ENCODE measurements at regions of chr11 and their contacts with region 1.

Region 1: DNA sequence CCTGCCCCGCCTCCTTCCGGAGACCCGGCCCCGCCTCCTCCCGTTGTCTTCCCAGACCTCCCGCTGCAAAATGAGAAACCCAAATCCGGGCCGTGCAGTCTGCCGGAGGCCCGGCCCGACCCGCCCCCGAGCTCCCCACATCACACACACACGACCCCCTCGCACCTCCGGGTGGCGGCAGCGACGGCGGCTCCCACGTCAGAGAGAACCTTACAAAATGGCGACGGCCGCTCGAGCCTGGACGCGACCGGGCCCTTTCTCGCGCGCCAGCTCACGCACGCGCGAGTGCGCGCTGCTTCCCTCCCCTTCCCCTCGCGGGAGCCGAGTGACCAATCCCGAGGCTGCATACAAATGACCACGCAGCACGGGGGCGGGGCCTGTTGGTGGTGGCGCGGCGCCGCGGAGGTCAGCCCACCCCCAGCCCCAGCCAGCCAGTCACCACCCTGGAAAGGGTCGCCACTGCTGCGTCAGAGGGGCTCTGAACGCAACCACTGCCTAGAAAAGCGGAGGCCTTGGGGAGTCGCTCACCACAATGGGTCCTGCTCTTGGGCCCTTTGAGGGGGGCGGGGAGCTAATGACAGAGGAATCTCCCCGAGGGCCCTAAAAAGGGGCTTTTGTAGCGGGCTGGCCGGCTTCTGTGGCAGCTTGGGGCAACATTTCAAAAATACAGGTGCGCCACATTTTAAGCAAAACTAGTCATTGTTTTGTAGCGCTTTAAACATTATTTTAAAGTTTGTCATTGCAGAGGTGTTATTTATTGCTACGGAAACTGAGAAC is at the start of gene RBM4B:
- DNase-seq: peak; percentile 91 to 98 (median 94)
- ATAC-seq: peak; percentile 88 to 91 (median 89)
- H3K4me3 ChIP-seq: peak within 1 kb of the TSS; percentile 89 to 94
- H3K4me3 Mint-ChIP-seq: peak within 1 kb of the TSS; percentile 90 to 96 (median 94)
- H3K27ac ChIP-seq: peak within 1 kb of the TSS; percentile 97
- H3K27ac Mint-ChIP-seq: peak within 1 kb of the TSS; percentile 98
- H3K4me1 ChIP-seq: peaks cover 21 to 32% of the 10 kb centered on the region in 2 experiments
- H3K4me1 Mint-ChIP-seq: peaks cover 43 to 44% (median 44%) of the 10 kb centered on the region in 3 donors
- H3K27me3 ChIP-seq: no peaks in the 10 kb centered on the region
- H3K27me3 Mint-ChIP-seq: no peaks in the 10 kb centered on the region
- total RNA-seq, gene RBM4B: 9.1 to 26.2 (median 20.2) TPM

Region 2: GRCh38 chr11:66438504-66439466 is 239.0 kb before region 1 on chr11 and contains the start of gene MRPL11:
- CTCF ChIA-PET with region 1: interaction called in 1 of 2 experiments, 14 read pairs
- POLR2A ChIA-PET with region 1: no interaction called
- DNase-seq: peak; percentile 78 to 95 (median 86)
- ATAC-seq: peak; percentile 94 to 99 (median 97)
- H3K4me3 ChIP-seq: peak within 1 kb of the TSS; percentile 69 to 96
- H3K4me3 Mint-ChIP-seq: peak within 1 kb of the TSS; percentile 81 to 86 (median 84)
- H3K27ac ChIP-seq: peak within 1 kb of the TSS; percentile 58
- H3K27ac Mint-ChIP-seq: peak within 1 kb of the TSS; percentile 95 to 100
- H3K4me1 ChIP-seq: peaks cover 4 to 11% of the 10 kb centered on the region in 2 experiments
- H3K4me1 Mint-ChIP-seq: peaks cover 11 to 16% (median 13%) of the 10 kb centered on the region in 3 donors
- H3K27me3 ChIP-seq: no peaks in the 10 kb centered on the region
- H3K27me3 Mint-ChIP-seq: peaks cover 2% of the 10 kb centered on the region in 2 donors
- total RNA-seq, gene MRPL11: 23.5 to 29.4 (median 27.2) TPM

Region 3: DNA sequence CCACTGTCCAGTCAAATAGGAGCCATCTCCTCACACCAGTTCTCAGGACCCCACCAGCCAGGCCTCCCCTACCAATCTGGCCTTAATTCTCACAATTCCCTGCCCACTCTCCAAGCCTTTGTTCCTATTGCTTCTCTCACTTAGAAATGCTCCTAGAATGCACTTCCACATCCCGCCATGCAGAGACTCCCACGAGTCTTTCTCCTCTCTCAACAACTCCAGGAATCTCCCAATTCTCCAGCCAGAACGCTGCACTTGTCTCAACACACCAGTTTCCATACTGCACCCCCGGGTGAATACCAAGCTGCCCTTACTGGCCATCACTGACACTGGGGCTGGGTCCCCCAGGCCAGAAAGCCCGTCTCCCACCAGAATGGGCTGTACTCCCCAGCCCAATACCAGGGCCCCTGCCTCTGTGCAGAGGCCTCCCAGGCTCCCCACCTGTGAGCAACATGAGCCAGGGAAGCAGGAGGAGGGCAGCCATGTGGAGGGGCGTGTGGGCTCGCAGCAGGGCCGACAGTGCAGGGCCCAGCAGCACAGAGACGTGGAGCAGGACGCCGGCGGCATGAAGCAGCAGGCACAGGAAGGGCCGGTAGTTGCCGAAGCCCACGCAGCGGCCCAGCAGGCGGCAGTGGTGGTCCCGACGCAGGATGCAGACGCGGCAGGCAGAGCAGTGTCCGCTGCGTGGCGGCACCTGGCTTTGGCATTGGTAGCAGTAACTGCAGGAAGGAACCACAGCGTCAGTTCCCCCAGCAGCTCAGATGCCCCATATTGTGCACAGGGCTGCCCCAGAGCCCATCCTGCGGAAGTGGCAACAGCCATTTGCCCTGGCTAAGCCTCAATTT is 134.3 kb before region 1 on chr11:
- CTCF ChIA-PET with region 1: interaction called in 1 of 2 experiments, 12 read pairs
- POLR2A ChIA-PET with region 1: no interaction called
- DNase-seq: peak; percentile 45 to 85 (median 64)
- ATAC-seq: peak; percentile 71 to 75 (median 73)
- H3K4me3 ChIP-seq: peak overlapping the region; percentile 25 to 38
- H3K4me3 Mint-ChIP-seq: peak overlapping the region; percentile 58 to 81 (median 61)
- H3K27ac ChIP-seq: peak overlapping the region; percentile 69
- H3K27ac Mint-ChIP-seq: peak overlapping the region; percentile 88 to 96
- H3K4me1 ChIP-seq: peaks cover 8 to 42% of the 10 kb centered on the region in 2 experiments
- H3K4me1 Mint-ChIP-seq: peaks cover 35 to 45% (median 44%) of the 10 kb centered on the region in 3 donors
- H3K27me3 ChIP-seq: peaks cover 0 to 2% of the 10 kb centered on the region in 2 experiments
- H3K27me3 Mint-ChIP-seq: no peaks in the 10 kb centered on the region

Region 4: DNA sequence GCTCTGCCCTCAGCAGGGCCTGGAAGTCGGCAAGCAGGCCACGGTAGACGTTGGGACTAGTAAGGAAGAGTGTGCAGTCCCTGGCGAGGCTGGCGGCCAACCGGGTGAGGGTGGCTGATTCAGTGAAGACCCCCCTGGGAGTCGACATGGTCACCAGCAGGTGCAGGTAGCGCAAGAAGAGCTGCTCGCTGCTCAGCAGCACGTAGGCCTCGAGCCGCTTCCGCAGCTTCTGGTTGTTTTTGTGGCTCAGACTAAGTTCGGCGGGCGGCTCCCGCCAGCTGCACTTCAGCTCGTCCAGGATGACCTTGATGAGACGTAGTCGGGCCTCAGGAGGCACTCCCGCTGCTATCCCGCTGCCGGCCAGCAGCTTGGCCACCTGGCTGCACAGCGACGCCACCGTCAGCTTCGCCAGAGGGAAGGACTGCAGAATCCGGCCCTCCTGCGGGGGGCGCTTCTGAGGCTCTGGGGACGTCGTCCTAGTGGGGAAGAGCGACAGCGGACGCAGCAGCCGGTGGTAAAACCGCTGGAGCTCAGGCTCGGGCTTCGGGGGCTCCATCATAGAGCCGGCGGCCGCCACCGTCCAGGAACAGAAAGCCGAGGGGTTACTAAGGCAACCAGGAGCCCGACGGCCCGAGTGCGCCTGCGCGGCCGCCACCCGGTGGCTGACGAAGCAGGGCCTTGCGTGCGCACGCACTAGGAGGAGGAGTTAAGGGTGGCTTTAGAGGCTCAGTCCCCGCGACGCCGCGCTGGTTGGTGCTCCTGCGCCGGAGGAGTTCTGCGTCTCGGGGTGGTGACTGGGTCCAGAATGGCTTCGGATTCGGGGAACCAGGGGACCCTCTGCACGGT is 85.1 kb before region 1 on chr11 and contains the starts of genes CCDC87 and CCS:
- CTCF ChIA-PET with region 1: interaction called in 1 of 2 experiments, 17 read pairs
- POLR2A ChIA-PET with region 1: no interaction called
- DNase-seq: peak; percentile 95 to 100 (median 98)
- ATAC-seq: peak; percentile 96 to 99 (median 98)
- H3K4me3 ChIP-seq: peak within 1 kb of the TSS; percentile 68 to 79
- H3K4me3 Mint-ChIP-seq: peak within 1 kb of the TSS; percentile 92 to 100 (median 100)
- H3K27ac ChIP-seq: peak within 1 kb of the TSS; percentile 77
- H3K27ac Mint-ChIP-seq: peak within 1 kb of the TSS; percentile 99 to 100
- H3K4me1 ChIP-seq: peaks cover 5 to 37% of the 10 kb centered on the region in 2 experiments
- H3K4me1 Mint-ChIP-seq: peaks cover 34 to 40% (median 35%) of the 10 kb centered on the region in 3 donors
- H3K27me3 ChIP-seq: peaks cover 0 to 7% of the 10 kb centered on the region in 2 experiments
- H3K27me3 Mint-ChIP-seq: no peaks in the 10 kb centered on the region
- total RNA-seq, gene CCDC87: 0.10 to 0.65 (median 0.32) TPM
- total RNA-seq, gene CCS: 32.3 to 69.5 (median 58.3) TPM

Region 5: DNA sequence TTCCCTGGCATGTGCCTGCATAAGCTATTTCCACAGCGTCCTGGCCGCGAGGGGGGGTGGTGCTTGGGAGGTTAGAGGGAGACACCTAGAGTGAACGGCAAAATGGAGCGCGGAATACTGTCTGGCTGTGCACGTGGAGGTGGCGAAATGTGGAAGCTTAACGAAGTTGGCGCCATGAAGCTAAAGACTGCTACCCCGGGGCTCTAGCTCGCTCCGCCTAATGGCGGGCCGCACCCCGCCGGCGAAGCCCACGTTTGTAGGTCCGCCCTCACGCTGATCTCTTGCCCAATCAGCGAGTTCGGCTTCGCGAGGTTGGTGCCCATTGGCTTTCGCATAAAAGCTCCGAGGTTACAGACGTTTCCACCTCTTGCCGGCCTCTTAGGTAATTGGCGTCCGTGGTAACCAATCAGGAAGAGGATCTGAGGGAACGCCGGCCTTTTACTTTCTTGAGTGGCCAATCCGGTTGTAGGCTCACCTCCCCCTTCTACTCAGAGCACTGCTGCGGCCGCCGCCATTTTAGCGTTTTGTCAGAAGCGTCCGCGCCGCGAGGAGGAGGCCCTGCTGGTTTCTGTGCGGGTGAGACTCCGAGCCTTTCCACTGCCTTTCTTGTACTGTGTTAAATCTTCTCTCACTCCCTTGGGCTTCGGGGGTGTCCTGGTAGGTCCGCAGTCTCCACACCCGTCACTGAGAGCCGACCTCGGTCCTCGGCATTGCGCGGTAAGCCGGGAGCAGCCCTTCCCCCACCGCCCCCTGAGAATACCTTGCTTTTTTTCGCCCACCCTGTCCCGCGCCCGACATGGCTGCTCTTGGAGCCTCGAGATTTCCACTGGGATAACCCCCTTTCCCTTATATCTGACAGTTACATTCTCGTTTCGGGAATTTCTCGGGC is 39.4 kb before region 1 on chr11 and contains the start of gene RBM4:
- CTCF ChIA-PET with region 1: interaction called in 1 of 2 experiments, 27 read pairs
- POLR2A ChIA-PET with region 1: interaction called, 6 to 26 read pairs
- DNase-seq: peak; percentile 80 to 99 (median 97)
- ATAC-seq: peak; percentile 88 to 95 (median 92)
- H3K4me3 ChIP-seq: peak within 1 kb of the TSS; percentile 78 to 100
- H3K4me3 Mint-ChIP-seq: peak within 1 kb of the TSS; percentile 98 to 99 (median 99)
- H3K27ac ChIP-seq: peak within 1 kb of the TSS; percentile 79
- H3K27ac Mint-ChIP-seq: peak within 1 kb of the TSS; percentile 97
- H3K4me1 ChIP-seq: peaks cover 45 to 51% of the 10 kb centered on the region in 2 experiments
- H3K4me1 Mint-ChIP-seq: peaks cover 65 to 72% (median 67%) of the 10 kb centered on the region in 3 donors
- H3K27me3 ChIP-seq: no peaks in the 10 kb centered on the region
- H3K27me3 Mint-ChIP-seq: no peaks in the 10 kb centered on the region
- total RNA-seq, gene RBM4: 163 to 233 (median 181) TPM

Measured in T-cell (primary cell).